ENCODE measurements at regions of chr17 and their contacts with region 1.

Region 1: DNA sequence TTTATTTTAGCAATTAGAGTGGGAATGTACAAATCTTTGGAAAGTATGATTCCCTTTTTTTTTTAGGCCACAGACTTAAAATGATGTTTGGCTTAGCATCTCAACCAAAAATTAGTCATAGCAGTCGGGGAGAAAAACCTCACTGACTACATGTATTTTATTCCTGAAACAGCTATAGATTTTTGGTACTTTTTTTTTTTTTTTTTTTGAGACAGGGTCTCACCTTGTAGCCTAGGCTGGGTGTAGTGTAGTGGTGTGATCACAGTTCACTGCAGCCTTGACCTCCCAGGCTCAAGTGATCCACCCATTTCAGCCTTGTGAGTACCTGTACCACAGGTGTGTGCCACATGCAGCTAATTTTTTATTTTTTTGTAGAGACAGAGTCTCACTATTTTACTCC is 23.4 kb downstream of the RNFT1 start:
- DNase-seq: no peak
- H3K27ac ChIP-seq: no peak overlapping the region
- CTCF ChIP-seq: no peak

Region 2: DNA sequence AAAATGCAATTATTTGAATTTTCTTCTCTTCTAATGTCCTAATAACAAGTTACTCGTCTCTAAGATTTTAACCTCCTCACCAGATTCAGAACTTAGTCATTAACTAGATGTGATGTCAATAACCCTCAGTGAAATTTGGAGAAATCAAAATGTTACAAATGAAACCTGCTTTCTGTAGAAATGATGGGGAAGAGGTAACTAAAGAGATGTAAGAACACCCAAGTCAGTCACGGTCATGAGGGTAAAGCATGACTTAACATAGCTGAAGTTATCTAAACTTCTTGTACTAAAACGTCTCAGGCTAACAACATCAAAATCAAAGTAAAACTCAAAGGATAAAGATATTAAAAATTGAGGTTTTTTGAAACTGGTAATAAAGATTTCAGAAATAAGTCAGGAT is 13.7 kb after region 1 on chr17:
- CTCF ChIA-PET with region 1: no interaction called
- POLR2A ChIA-PET with region 1: interaction called, 17 read pairs
- DNase-seq: no peak
- H3K27ac ChIP-seq: no peak overlapping the region
- CTCF ChIP-seq: no peak

Measured in RWPE1 (cell line).